ENCODE measurements at regions of chr1 and their contacts with region 1.

Region 1: GRCh38 chr1:53552146-53552940 is 93.1 kb downstream of the DMRTB1 start:
- DNase-seq: no peak
- H3K4me3 ChIP-seq: no peak overlapping the region
- H3K27ac ChIP-seq: no peak overlapping the region
- H3K4me1 ChIP-seq: no peaks in the 10 kb centered on the region; the same call in 1 of the 2 replicates
- H3K27me3 ChIP-seq: no peaks in the 10 kb centered on the region
- CTCF ChIP-seq: no peak

Region 2: DNA sequence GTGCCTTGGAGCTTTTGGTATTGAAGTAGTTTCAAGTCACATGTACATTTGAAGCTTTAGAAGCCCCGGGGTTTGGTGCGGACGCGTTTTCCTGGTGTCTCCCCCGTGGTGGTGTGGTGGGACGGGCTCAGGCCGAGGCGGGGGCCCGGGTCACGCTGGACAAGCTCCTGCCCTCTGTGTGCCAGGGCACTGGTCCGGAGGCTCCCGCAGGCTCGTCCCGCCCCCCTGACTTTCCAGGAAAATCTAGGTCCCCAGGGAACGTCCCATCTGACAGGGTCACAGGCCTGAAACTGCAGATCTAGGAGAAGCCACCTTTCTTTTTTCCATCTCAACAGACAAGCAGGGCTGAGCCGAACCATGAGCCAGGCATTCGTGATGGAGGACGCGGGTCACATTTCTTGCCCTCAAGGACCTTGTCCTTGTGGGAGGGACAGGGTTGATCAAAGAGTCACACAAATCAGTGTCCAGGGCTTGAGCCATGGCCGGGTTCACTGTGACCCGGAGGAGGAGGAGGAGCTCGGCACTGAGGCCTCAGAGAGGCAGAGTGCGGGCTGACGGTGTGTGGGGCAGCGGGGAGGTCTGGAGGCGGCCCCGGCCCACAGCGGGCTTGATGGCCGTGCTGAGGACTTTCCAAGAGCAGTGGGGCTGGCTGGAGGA is 91.5 kb before region 1 on chr1:
- CTCF ChIA-PET with region 1: no interaction called
- POLR2A ChIA-PET with region 1: no interaction called
- intact Hi-C with region 1: no loop called
- DNase-seq: peak in 1 of 2 experiments; percentile 26
- H3K4me3 ChIP-seq: no peak overlapping the region
- H3K27ac ChIP-seq: no peak overlapping the region
- H3K4me1 ChIP-seq: no peaks in the 10 kb centered on the region
- H3K27me3 ChIP-seq: no peaks in the 10 kb centered on the region
- CTCF ChIP-seq: no peak

Region 3: GRCh38 chr1:53535226-53535625 is 17.1 kb before region 1 on chr1:
- CTCF ChIA-PET with region 1: no interaction called
- POLR2A ChIA-PET with region 1: interaction called, 10 read pairs
- intact Hi-C with region 1: no loop called
- DNase-seq: no peak
- H3K4me3 ChIP-seq: no peak overlapping the region
- H3K27ac ChIP-seq: no peak overlapping the region
- H3K4me1 ChIP-seq: peaks cover 25% of the 10 kb centered on the region
- H3K27me3 ChIP-seq: no peaks in the 10 kb centered on the region
- CTCF ChIP-seq: no peak

Region 4: GRCh38 chr1:53620061-53620855 is 67.9 kb after region 1 on chr1:
- CTCF ChIA-PET with region 1: no interaction called
- POLR2A ChIA-PET with region 1: interaction called, 16 read pairs
- intact Hi-C with region 1: no loop called
- DNase-seq: no peak
- H3K4me3 ChIP-seq: no peak overlapping the region
- H3K27ac ChIP-seq: no peak overlapping the region
- H3K4me1 ChIP-seq: no peaks in the 10 kb centered on the region
- H3K27me3 ChIP-seq: no peaks in the 10 kb centered on the region
- CTCF ChIP-seq: no peak

Region 5: DNA sequence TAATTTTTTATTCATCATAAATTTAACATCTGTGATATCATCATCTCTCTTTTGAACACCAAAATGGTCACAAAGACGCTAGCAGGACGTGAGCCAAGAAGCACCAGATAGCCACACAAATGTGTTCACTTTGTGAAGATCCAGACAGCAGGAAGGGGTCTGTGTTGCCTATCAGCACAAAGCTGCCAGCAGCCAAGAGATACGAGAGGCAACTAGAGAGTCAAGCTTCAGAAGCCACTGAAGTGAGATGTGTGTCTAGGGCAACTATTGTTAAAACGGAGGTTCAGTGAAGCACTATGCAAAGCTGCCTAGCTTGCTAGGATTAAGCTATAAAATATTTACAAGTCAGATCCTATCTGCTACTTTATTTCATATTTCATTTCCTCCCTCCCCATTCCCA is 240.5 kb after region 1 on chr1:
- CTCF ChIA-PET with region 1: no interaction called
- POLR2A ChIA-PET with region 1: no interaction called
- intact Hi-C with region 1: no loop called
- DNase-seq: no peak
- H3K4me3 ChIP-seq: no peak overlapping the region
- H3K27ac ChIP-seq: no peak overlapping the region
- H3K4me1 ChIP-seq: no peaks in the 10 kb centered on the region
- H3K27me3 ChIP-seq: no peaks in the 10 kb centered on the region
- CTCF ChIP-seq: no peak

Measured in PC-9 (cell line).